Heart right ventricle (tissue), 16 donors: ENCODE measurements at regions of chr3 and their contacts with region 1.

Region 1: GRCh38 chr3:196537319-196537984 is 22.3 kb upstream of the SMCO1 start:
- DNase-seq: no peak
- ATAC-seq: no peak
- H3K4me3 ChIP-seq: no peak overlapping the region
- H3K27ac ChIP-seq: no peak overlapping the region
- H3K4me1 ChIP-seq: no peaks in the 10 kb centered on the region
- H3K27me3 ChIP-seq: peaks cover 0 to 9% (median 0%) of the 10 kb centered on the region in 7 donors
- CTCF ChIP-seq: peak; percentile 43 to 74 (median 62)

Region 2: DNA sequence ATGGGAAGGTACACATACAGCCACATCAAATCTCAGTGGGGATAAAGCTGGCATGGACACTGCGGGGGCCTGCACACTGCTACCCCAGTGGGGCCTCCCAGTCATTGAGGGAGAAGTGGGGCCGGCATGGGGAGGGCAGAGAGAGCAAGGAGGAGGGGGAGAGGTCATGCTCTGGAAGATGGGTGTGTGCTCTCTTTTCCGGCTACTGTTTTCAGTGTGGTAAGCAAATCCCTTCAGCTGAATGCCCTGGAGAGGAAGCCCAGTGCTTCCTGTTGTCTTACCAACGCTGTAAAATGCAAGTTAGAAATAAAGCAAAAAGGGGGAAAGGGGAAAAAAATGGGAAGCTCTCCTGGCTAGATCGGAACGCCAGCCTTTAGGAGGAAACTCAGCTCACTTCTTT is 132.9 kb after region 1 on chr3:
- intact Hi-C with region 1: loop called in 1 of 10 experiments (anchors 10 kb)
- DNase-seq: no peak
- ATAC-seq: peak; percentile 55 to 93 (median 76)
- H3K4me3 ChIP-seq: peak overlapping the region in 1 of 10 donors; percentile 12
- H3K27ac ChIP-seq: peak overlapping the region in 8 of 10 donors; percentile 15 to 67 (median 48)
- H3K4me1 ChIP-seq: peaks cover 0 to 34% (median 8%) of the 10 kb centered on the region in 9 donors
- H3K27me3 ChIP-seq: peaks cover 0 to 16% (median 0%) of the 10 kb centered on the region in 7 donors
- CTCF ChIP-seq: no peak

Region 3: GRCh38 chr3:196684548-196685407 is 147.3 kb after region 1 on chr3:
- intact Hi-C with region 1: loop called in 8 of 10 experiments (anchors 5 to 10 kb)
- DNase-seq: peak; percentile 19 to 74
- ATAC-seq: peak in 7 of 8 donors; percentile 71 to 90 (median 82)
- H3K4me3 ChIP-seq: peak overlapping the region in 2 of 10 donors; percentile 3 to 17
- H3K27ac ChIP-seq: peak overlapping the region in 4 of 10 donors; percentile 24 to 73 (median 34)
- H3K4me1 ChIP-seq: peaks cover 0 to 48% (median 10%) of the 10 kb centered on the region in 9 donors
- H3K27me3 ChIP-seq: peaks cover 0 to 2% (median 0%) of the 10 kb centered on the region in 7 donors
- CTCF ChIP-seq: peak; percentile 81 to 91 (median 89)

Region 4: DNA sequence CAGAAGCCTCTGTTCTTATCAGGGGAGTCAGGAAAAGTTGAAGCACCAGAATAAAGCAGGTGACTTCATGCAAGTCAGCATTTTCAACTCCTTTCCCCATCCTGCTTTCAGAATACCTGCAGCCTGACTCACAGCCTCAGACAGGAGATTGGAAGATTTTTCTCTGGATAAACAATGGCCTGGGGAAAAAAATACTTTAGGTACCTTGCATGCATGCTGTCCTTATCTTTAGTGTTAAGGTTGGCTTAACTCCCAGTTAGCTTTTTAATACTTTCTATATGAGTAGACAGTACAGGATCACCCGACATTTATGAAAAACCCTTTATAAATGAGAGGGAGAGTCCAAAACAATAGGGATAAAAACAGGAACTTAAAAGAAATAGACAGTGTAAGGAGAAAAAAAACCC is 255.8 kb after region 1 on chr3:
- intact Hi-C with region 1: no loop called
- DNase-seq: no peak
- ATAC-seq: peak in 2 of 8 donors; percentile 11 to 42
- H3K4me3 ChIP-seq: no peak overlapping the region
- H3K27ac ChIP-seq: no peak overlapping the region
- H3K4me1 ChIP-seq: peaks cover 0 to 22% (median 6%) of the 10 kb centered on the region in 9 donors
- H3K27me3 ChIP-seq: no peaks in the 10 kb centered on the region
- CTCF ChIP-seq: no peak

Region 5: GRCh38 chr3:197076415-197076814 is 539.0 kb after region 1 on chr3:
- intact Hi-C with region 1: loop called in 1 of 10 experiments (anchors 10 kb)
- DNase-seq: no peak
- ATAC-seq: no peak
- H3K4me3 ChIP-seq: no peak overlapping the region
- H3K27ac ChIP-seq: no peak overlapping the region
- H3K4me1 ChIP-seq: no peaks in the 10 kb centered on the region
- H3K27me3 ChIP-seq: no peaks in the 10 kb centered on the region
- CTCF ChIP-seq: no peak

Region 6: DNA sequence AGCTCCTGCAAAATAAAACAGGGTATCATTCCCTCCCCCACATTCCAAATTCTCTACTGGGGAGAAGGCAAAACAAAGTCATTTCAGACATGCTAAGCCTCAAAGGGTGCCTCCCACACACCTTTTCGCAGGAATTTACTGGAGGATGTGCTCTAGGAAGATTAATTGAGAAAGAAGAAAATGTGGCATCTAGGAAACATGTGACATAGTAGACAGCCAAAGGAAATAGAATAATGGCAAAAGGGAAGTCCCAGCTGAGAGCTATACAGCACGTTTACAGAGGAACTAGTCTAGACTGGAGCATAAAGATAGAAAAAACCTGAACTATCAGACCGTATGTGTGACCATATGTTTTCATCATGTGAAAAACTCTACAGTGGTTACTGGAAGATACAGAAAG is 550.9 kb after region 1 on chr3:
- intact Hi-C with region 1: no loop called
- DNase-seq: no peak
- ATAC-seq: no peak
- H3K4me3 ChIP-seq: no peak overlapping the region
- H3K27ac ChIP-seq: no peak overlapping the region
- H3K4me1 ChIP-seq: peaks cover 0 to 17% (median 0%) of the 10 kb centered on the region in 9 donors
- H3K27me3 ChIP-seq: no peaks in the 10 kb centered on the region
- CTCF ChIP-seq: no peak